ENCODE measurements at regions of chr19 and their contacts with region 1.

Region 1: GRCh38 chr19:47713046-47714021 is at the start of gene EHD2:
- DNase-seq: peak in 1 of 2 donors; percentile 84
- H3K4me3 ChIP-seq: peak within 1 kb of the TSS; percentile 88 to 100
- H3K27ac ChIP-seq: peak within 1 kb of the TSS; percentile 87 to 98
- H3K4me1 ChIP-seq: peaks cover 3 to 42% of the 10 kb centered on the region in 2 donors
- H3K27me3 ChIP-seq: no peaks in the 10 kb centered on the region
- CTCF ChIP-seq: peak; percentile 97 to 98 (median 97)
- total RNA-seq, gene EHD2: 342 TPM

Region 2: GRCh38 chr19:47729992-47730889 is 16.9 kb after region 1 on chr19:
- intact Hi-C with region 1: loop called (anchors 1 kb)
- DNase-seq: peak in 1 of 2 donors; percentile 87
- H3K4me3 ChIP-seq: peak overlapping the region; percentile 43 to 54
- H3K27ac ChIP-seq: peak overlapping the region; percentile 89 to 95
- H3K4me1 ChIP-seq: peaks cover 6 to 26% of the 10 kb centered on the region in 2 donors
- H3K27me3 ChIP-seq: no peaks in the 10 kb centered on the region
- CTCF ChIP-seq: no peak

Region 3: GRCh38 chr19:47790398-47790814 is 77.1 kb after region 1 on chr19:
- intact Hi-C with region 1: loop called (anchors 2 kb)
- DNase-seq: peak in 1 of 2 donors; percentile 89
- H3K4me3 ChIP-seq: no peak overlapping the region
- H3K27ac ChIP-seq: no peak overlapping the region
- H3K4me1 ChIP-seq: peaks cover 3 to 14% of the 10 kb centered on the region in 2 donors
- H3K27me3 ChIP-seq: no peaks in the 10 kb centered on the region
- CTCF ChIP-seq: peak; percentile 72 to 90 (median 90)

Measured in ascending aorta (tissue), 2 donors.